ENCODE measurements at regions of chr3 and their contacts with region 1.

Region 1: GRCh38 chr3:160343132-160343531 is 55.9 kb downstream of the IFT80 start:
- DNase-seq: no peak
- ATAC-seq: no peak
- H3K4me3 ChIP-seq: no peak overlapping the region
- H3K4me1 ChIP-seq: no peaks in the 10 kb centered on the region
- CTCF ChIP-seq: no peak

Region 2: DNA sequence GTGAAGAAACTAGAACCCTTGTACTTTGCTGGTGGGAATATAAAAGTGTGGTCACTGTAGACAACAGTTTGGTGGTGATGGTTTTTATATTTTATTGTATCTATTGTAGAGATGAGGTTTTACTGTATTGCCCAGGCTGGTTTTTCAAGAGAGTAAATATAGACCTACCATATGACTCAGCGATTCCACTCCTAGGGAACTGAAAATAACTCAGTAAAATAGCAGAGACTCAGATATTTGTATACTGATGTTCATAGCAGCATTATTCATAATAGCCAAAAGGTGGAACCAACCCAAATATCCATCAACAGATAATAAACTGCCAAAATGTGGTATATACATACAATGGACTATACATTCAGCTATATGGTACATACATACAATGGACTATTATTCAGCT is 423.3 kb before region 1 on chr3:
- intact Hi-C with region 1: no loop called
- DNase-seq: no peak
- ATAC-seq: peak; percentile 21
- H3K4me3 ChIP-seq: no peak overlapping the region
- H3K4me1 ChIP-seq: no peaks in the 10 kb centered on the region
- CTCF ChIP-seq: no peak

Region 3: GRCh38 chr3:160027541-160028195 is 315.5 kb before region 1 on chr3:
- intact Hi-C with region 1: loop called in 1 of 2 experiments (anchors 5 kb)
- DNase-seq: no peak
- ATAC-seq: no peak
- H3K4me3 ChIP-seq: no peak overlapping the region
- H3K4me1 ChIP-seq: no peaks in the 10 kb centered on the region
- CTCF ChIP-seq: no peak

Region 4: GRCh38 chr3:160163229-160163878 is 179.8 kb before region 1 on chr3:
- intact Hi-C with region 1: loop called (anchors 5 to 10 kb)
- DNase-seq: peak in 1 of 3 donors; percentile 11
- ATAC-seq: no peak
- H3K4me3 ChIP-seq: no peak overlapping the region
- H3K4me1 ChIP-seq: no peaks in the 10 kb centered on the region
- CTCF ChIP-seq: no peak

Measured in mucosa of descending colon (tissue), 3 donors.